Activated T-helper 2 cell treated with anti-CD3 and anti-CD28 coated beads, Interferon-gamma antibody, Interleukin-2, Interleukin-4, amounts not matched to agents 10 μg/mL and 5 μg/mL and 100 μg/mL, durations not matched to agents 14 hours and 24 hours and 36 hours (primary cell): ENCODE measurements at regions of chr9 and their contacts with region 1.

Region 1: GRCh38 chr9:124218438-124218982 is 39.2 kb upstream of the NEK6 start:
- DNase-seq: peak; percentile 33
- H3K4me3 Mint-ChIP-seq: no peak overlapping the region
- H3K27ac Mint-ChIP-seq: peak overlapping the region; percentile 78
- H3K4me1 Mint-ChIP-seq: peaks cover 63% of the 10 kb centered on the region
- H3K27me3 Mint-ChIP-seq: no peaks in the 10 kb centered on the region

Region 2: DNA sequence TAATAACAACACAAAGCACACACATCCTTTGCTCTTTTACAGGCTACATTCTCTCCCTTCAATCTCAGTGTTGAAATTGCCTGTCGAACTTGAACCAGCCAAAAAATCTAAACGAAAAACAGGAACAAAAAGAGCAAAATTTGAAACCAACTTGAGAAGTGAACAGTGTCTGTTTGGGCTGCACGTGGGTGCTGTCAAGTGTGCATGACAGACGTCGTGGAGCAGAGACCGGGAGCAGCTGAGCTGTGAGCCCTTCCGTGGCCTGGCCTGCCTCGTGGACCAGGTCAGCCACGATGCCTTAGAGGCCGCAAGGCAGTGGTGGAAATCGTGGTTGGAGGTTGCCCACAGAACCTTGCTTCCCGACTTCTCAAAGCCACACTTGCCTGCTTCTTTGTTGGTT is 253.7 kb before region 1 on chr9:
- intact Hi-C with region 1: no loop called
- DNase-seq: no peak
- H3K4me3 Mint-ChIP-seq: no peak overlapping the region
- H3K27ac Mint-ChIP-seq: no peak overlapping the region
- H3K4me1 Mint-ChIP-seq: no peaks in the 10 kb centered on the region
- H3K27me3 Mint-ChIP-seq: peaks cover 17% of the 10 kb centered on the region

Region 3: GRCh38 chr9:124239249-124240073 is 21.0 kb after region 1 on chr9:
- intact Hi-C with region 1: loop called (anchors 1 kb)
- DNase-seq: no peak
- H3K4me3 Mint-ChIP-seq: no peak overlapping the region
- H3K27ac Mint-ChIP-seq: peak overlapping the region; percentile 54
- H3K4me1 Mint-ChIP-seq: peaks cover 47% of the 10 kb centered on the region
- H3K27me3 Mint-ChIP-seq: peaks cover 1% of the 10 kb centered on the region

Region 4: GRCh38 chr9:124254261-124254682 is 35.8 kb after region 1 on chr9:
- intact Hi-C with region 1: loop called (anchors 1 kb)
- DNase-seq: peak; percentile 27
- H3K4me3 Mint-ChIP-seq: peak overlapping the region; percentile 43
- H3K27ac Mint-ChIP-seq: peak overlapping the region; percentile 55
- H3K4me1 Mint-ChIP-seq: peaks cover 60% of the 10 kb centered on the region
- H3K27me3 Mint-ChIP-seq: no peaks in the 10 kb centered on the region

Region 5: DNA sequence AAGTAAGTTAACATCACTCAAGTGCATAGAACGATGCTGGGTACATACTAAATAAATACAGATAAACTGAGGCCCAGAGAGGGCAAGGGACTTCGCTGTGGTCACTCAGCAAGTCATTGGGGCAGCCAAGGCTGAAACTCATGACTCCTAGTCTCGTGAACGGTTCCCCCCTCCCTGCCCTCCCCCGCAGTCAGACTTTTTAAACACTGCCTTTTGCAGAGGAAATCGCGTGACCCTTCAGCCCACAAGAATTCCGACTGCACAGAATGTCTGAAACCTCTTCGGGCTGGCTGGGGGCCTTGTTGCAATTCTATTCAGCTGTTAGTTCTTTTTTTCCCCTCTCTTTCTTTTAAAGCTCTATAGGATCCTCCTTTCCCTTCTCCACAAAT is 67.4 kb after region 1 on chr9:
- intact Hi-C with region 1: loop called (anchors 2 kb)
- DNase-seq: peak; percentile 27
- H3K4me3 Mint-ChIP-seq: peak overlapping the region; percentile 77
- H3K27ac Mint-ChIP-seq: peak overlapping the region; percentile 97
- H3K4me1 Mint-ChIP-seq: peaks cover 47% of the 10 kb centered on the region
- H3K27me3 Mint-ChIP-seq: no peaks in the 10 kb centered on the region

Region 6: GRCh38 chr9:124392871-124393460 is 174.5 kb after region 1 on chr9:
- intact Hi-C with region 1: loop called (anchors 10 kb)
- DNase-seq: no peak
- H3K4me3 Mint-ChIP-seq: no peak overlapping the region
- H3K27ac Mint-ChIP-seq: no peak overlapping the region
- H3K4me1 Mint-ChIP-seq: peaks cover 31% of the 10 kb centered on the region
- H3K27me3 Mint-ChIP-seq: no peaks in the 10 kb centered on the region